ENCODE measurements at regions of chr3 and their contacts with region 1.

Region 1: GRCh38 chr3:188262913-188263683 is 109.1 kb downstream of the LPP start:
- DNase-seq: peak; percentile 83
- ATAC-seq: peak; percentile 16
- H3K4me3 ChIP-seq: no peak overlapping the region
- H3K27ac ChIP-seq: peak overlapping the region; percentile 37
- H3K4me1 ChIP-seq: peaks cover 44% of the 10 kb centered on the region
- H3K27me3 ChIP-seq: no peaks in the 10 kb centered on the region
- CTCF ChIP-seq: no peak
- POLR2A ChIP-seq: no peak
- RAD21 ChIP-seq: no peak

Region 2: GRCh38 chr3:187919048-187919447 is 344.1 kb before region 1 on chr3:
- CTCF ChIA-PET with region 1: no interaction called
- POLR2A ChIA-PET with region 1: no interaction called
- dilution Hi-C with region 1: no loop called
- in situ Hi-C with region 1: no loop called
- intact Hi-C with region 1: loop called (anchors 10 kb)
- DNase-seq: no peak
- ATAC-seq: no peak
- H3K4me3 ChIP-seq: no peak overlapping the region
- H3K27ac ChIP-seq: no peak overlapping the region
- H3K4me1 ChIP-seq: peaks cover 27% of the 10 kb centered on the region
- H3K27me3 ChIP-seq: no peaks in the 10 kb centered on the region
- CTCF ChIP-seq: no peak
- POLR2A ChIP-seq: no peak
- RAD21 ChIP-seq: no peak

Region 3: GRCh38 chr3:188212308-188212969 is 50.7 kb before region 1 on chr3:
- CTCF ChIA-PET with region 1: interaction called, 3 read pairs
- POLR2A ChIA-PET with region 1: interaction called, 3 read pairs
- dilution Hi-C with region 1: no loop called
- in situ Hi-C with region 1: no loop called
- intact Hi-C with region 1: loop called (anchors 1 kb)
- DNase-seq: peak; percentile 89
- ATAC-seq: peak; percentile 67
- H3K4me3 ChIP-seq: peak overlapping the region; percentile 43
- H3K27ac ChIP-seq: peak overlapping the region; percentile 100
- H3K4me1 ChIP-seq: peaks cover 42% of the 10 kb centered on the region
- H3K27me3 ChIP-seq: no peaks in the 10 kb centered on the region
- CTCF ChIP-seq: no peak
- POLR2A ChIP-seq: no peak
- RAD21 ChIP-seq: no peak

Region 4: DNA sequence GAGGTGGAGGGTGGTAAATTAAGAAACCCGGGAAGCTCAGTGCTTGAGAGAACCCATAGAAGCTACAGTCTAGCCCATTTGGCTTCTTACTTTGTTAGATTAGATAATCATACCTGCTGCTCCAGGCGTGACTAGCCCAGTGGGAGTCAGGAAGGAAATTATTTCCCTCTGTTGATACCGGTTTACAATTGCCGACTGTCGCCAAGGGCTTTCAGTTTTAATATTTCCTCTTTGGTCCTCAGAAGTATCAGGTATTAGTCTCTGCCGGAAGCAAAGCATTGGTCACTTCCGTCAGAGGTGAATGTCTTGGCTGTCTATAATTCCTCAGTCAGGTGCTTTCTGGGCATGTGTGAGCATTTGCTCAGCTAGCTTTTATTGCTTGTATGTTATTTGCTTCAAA is 33.9 kb before region 1 on chr3:
- CTCF ChIA-PET with region 1: no interaction called
- POLR2A ChIA-PET with region 1: no interaction called
- dilution Hi-C with region 1: no loop called
- in situ Hi-C with region 1: no loop called
- intact Hi-C with region 1: no loop called
- DNase-seq: no peak
- ATAC-seq: no peak
- H3K4me3 ChIP-seq: no peak overlapping the region
- H3K27ac ChIP-seq: no peak overlapping the region
- H3K4me1 ChIP-seq: peaks cover 14% of the 10 kb centered on the region
- H3K27me3 ChIP-seq: no peaks in the 10 kb centered on the region
- CTCF ChIP-seq: no peak
- POLR2A ChIP-seq: no peak
- RAD21 ChIP-seq: no peak

Region 5: DNA sequence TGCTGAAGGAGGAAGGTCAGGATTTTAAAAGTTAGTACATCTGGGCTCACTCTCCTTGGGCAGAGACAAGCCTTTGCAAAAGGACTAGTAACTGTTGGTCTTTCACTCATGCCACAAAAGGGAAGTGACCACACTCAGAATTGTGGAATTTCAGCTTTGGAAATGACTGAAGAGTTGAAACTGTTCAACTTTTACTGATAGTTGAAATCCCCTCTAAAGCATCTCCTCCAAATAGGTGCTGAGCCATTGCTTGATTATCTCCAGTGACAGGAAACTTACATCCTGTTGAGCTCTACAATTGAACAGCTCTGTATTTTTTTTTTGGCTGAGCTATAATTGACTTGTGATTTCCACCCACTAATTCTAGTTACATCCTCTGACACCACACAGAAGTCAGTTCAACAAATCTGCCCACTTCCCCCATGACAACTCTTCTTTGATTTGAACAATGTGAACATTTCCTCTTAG is 653.9 kb after region 1 on chr3:
- CTCF ChIA-PET with region 1: interaction called, 11 read pairs
- POLR2A ChIA-PET with region 1: no interaction called
- dilution Hi-C with region 1: no loop called
- in situ Hi-C with region 1: no loop called
- intact Hi-C with region 1: no loop called
- DNase-seq: no peak
- ATAC-seq: peak; percentile 35; the same call in 1 of the 2 replicates
- H3K4me3 ChIP-seq: no peak overlapping the region
- H3K27ac ChIP-seq: no peak overlapping the region
- H3K4me1 ChIP-seq: peaks cover 4% of the 10 kb centered on the region; the same call in 1 of the 2 replicates
- H3K27me3 ChIP-seq: no peaks in the 10 kb centered on the region
- CTCF ChIP-seq: no peak
- POLR2A ChIP-seq: no peak
- RAD21 ChIP-seq: no peak

Region 6: DNA sequence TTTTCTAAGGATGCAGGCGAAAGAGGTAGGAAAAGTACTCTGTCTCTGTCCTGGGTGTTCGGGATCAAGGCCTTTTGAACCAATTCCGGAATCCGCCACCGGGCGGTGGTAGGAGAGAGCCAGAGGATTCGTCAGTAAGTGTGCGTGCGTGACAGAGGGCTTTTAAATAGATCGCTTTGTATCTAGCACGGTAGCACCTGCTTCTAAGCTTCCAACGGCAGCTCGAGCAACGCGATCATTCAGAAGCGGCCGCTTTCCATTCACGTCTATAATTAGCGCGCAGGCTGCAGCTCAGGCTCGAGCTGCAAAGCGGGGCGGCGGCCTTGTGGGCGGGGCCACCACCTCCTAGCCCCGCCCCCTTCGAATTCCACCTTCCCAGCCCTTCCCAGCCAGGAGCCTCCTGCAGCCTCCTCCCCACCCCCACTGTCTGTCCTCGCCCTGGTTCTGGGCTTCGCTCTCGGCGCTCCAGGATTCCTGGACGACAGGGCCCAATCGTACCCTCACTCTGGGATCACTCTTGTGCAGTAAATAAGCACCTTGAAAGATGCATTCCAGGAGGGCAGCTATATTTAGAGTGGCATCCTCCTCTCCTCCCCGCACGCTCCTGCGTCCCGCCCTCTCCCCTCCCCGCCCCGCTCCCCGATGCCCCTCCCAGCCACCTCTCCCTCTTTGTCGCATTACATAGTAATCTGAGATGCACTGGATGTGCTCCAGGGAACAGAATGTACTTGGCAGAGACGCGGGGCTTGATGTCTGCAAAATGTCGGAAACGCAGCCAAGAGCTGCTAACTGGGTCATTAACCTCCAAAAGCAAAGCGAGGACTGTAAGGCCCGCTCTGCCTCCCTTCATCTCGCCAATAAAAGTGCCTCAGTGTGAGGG is 684.5 kb after region 1 on chr3:
- CTCF ChIA-PET with region 1: no interaction called
- POLR2A ChIA-PET with region 1: no interaction called
- dilution Hi-C with region 1: no loop called
- in situ Hi-C with region 1: loop called (anchors 10 kb)
- intact Hi-C with region 1: loop called (anchors 2 kb)
- DNase-seq: peak; percentile 85
- ATAC-seq: peak; percentile 65
- H3K4me3 ChIP-seq: peak overlapping the region; percentile 36
- H3K27ac ChIP-seq: peak overlapping the region; percentile 69
- H3K4me1 ChIP-seq: peaks cover 19% of the 10 kb centered on the region
- H3K27me3 ChIP-seq: no peaks in the 10 kb centered on the region
- CTCF ChIP-seq: 0 out of 2 replicates have a peak, but pooled peaks have one; percentile 20
- POLR2A ChIP-seq: no peak
- RAD21 ChIP-seq: no peak